HCT116 (cell line): ENCODE measurements at regions of chr7 and their contacts with region 1.

Region 1: GRCh38 chr7:46544374-46545008 is 623.4 kb upstream of the IGFBP3 start:
- DNase-seq: peak; percentile 48
- ATAC-seq: peak; percentile 55
- H3K4me3 ChIP-seq: no peak overlapping the region
- H3K27ac ChIP-seq: peak overlapping the region; percentile 18; the same call in 1 of the 2 replicates
- H3K4me1 ChIP-seq: peaks cover 28 to 36% of the 10 kb centered on the region in 2 experiments
- H3K27me3 ChIP-seq: no peaks in the 10 kb centered on the region
- CTCF ChIP-seq: no peak
- POLR2A ChIP-seq: no peak
- RAD21 ChIP-seq: no peak

Region 2: GRCh38 chr7:46654546-46655443 is 110.3 kb after region 1 on chr7:
- CTCF ChIA-PET with region 1: no interaction called
- POLR2A ChIA-PET with region 1: no interaction called
- RAD21 ChIA-PET with region 1: no interaction called
- intact Hi-C with region 1: loop called (anchors 2 kb)
- DNase-seq: no peak
- ATAC-seq: no peak
- H3K4me3 ChIP-seq: no peak overlapping the region
- H3K27ac ChIP-seq: no peak overlapping the region
- H3K4me1 ChIP-seq: peaks cover 18 to 33% of the 10 kb centered on the region in 2 experiments
- H3K27me3 ChIP-seq: no peaks in the 10 kb centered on the region
- CTCF ChIP-seq: no peak; a peak in 1 of 6 replicates
- POLR2A ChIP-seq: no peak
- RAD21 ChIP-seq: no peak

Region 3: GRCh38 chr7:46752881-46753366 is 208.4 kb after region 1 on chr7:
- CTCF ChIA-PET with region 1: no interaction called
- POLR2A ChIA-PET with region 1: no interaction called
- RAD21 ChIA-PET with region 1: no interaction called
- intact Hi-C with region 1: loop called (anchors 10 kb)
- DNase-seq: peak; percentile 53
- ATAC-seq: peak; percentile 53
- H3K4me3 ChIP-seq: no peak overlapping the region
- H3K27ac ChIP-seq: peak overlapping the region; percentile 55; the same call in 1 of the 2 replicates
- H3K4me1 ChIP-seq: peaks cover 35 to 41% of the 10 kb centered on the region in 2 experiments
- H3K27me3 ChIP-seq: no peaks in the 10 kb centered on the region
- CTCF ChIP-seq: no peak
- POLR2A ChIP-seq: no peak
- RAD21 ChIP-seq: peak; percentile 35; the same call in 1 of the 2 replicates